Heart left ventricle (tissue), 16 donors: ENCODE measurements at regions of chr1 and their contacts with region 1.

Region 1: GRCh38 chr1:210400043-210400840 is 71.5 kb downstream of the HHAT start:
- DNase-seq: peak in 4 of 5 donors; percentile 30 to 64 (median 48)
- ATAC-seq: peak; percentile 88 to 94 (median 91)
- H3K4me3 ChIP-seq: no peak overlapping the region
- H3K27ac ChIP-seq: no peak overlapping the region
- H3K4me1 ChIP-seq: peaks cover 0 to 11% (median 0%) of the 10 kb centered on the region in 12 donors
- H3K27me3 ChIP-seq: no peaks in the 10 kb centered on the region
- CTCF ChIP-seq: peak; percentile 68 to 90 (median 78)
- POLR2A ChIP-seq: no peak

Region 2: GRCh38 chr1:210143465-210144062 is 256.7 kb before region 1 on chr1:
- intact Hi-C with region 1: loop called (anchors 1 to 5 kb)
- DNase-seq: peak; percentile 47 to 78 (median 61)
- ATAC-seq: peak in 1 of 4 donors; percentile 51
- H3K4me3 ChIP-seq: no peak overlapping the region
- H3K27ac ChIP-seq: no peak overlapping the region
- H3K4me1 ChIP-seq: no peaks in the 10 kb centered on the region
- H3K27me3 ChIP-seq: peaks cover 0 to 7% (median 0%) of the 10 kb centered on the region in 9 donors
- CTCF ChIP-seq: peak; percentile 55 to 80 (median 68)
- POLR2A ChIP-seq: no peak

Region 3: GRCh38 chr1:210360852-210361477 is 39.3 kb before region 1 on chr1:
- intact Hi-C with region 1: loop called in 9 of 10 experiments (anchors 2 to 5 kb)
- DNase-seq: no peak
- ATAC-seq: peak in 3 of 4 donors; percentile 47 to 66 (median 64)
- H3K4me3 ChIP-seq: no peak overlapping the region
- H3K27ac ChIP-seq: no peak overlapping the region
- H3K4me1 ChIP-seq: peaks cover 0 to 26% (median 11%) of the 10 kb centered on the region in 12 donors
- H3K27me3 ChIP-seq: no peaks in the 10 kb centered on the region
- CTCF ChIP-seq: peak; percentile 40 to 73 (median 58)
- POLR2A ChIP-seq: no peak

Region 4: GRCh38 chr1:210600421-210601159 is 200.3 kb after region 1 on chr1:
- intact Hi-C with region 1: no loop called
- DNase-seq: no peak
- ATAC-seq: no peak
- H3K4me3 ChIP-seq: no peak overlapping the region
- H3K27ac ChIP-seq: no peak overlapping the region
- H3K4me1 ChIP-seq: peaks cover 0 to 16% (median 0%) of the 10 kb centered on the region in 12 donors
- H3K27me3 ChIP-seq: no peaks in the 10 kb centered on the region
- CTCF ChIP-seq: no peak
- POLR2A ChIP-seq: no peak

Region 5: DNA sequence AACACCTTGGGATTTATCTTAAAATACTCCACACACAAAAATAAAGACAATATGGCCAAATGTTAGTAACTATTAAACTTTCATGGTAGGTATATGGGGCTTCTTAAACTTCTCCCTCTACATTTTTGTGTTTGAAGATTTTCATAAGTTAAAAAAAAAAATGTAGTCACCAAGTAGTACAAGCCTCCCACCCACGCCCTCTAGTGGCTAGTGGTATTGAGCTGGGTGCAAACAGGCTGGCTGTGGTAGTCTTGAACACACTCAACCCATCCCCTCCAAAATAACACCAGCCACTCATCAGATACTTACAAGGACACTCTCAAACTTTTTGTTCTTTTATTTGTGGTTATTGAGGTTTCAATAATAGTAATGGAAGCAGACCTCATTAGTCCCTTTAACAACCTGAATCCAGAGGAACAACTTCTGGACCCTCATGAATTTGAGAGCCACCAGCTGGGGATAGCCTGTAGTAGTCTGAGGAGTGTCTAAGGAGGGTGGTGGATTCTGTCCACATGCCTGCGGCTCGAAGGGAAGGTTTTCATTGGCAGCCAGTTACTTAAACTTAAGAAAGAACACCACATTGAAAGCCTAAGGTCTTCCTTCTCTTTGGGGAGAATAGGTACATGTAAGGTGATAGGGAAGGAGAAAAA is 1076.1 kb after region 1 on chr1:
- intact Hi-C with region 1: loop called in 1 of 10 experiments (anchors 10 kb)
- DNase-seq: peak in 4 of 5 donors; percentile 58 to 72 (median 63)
- ATAC-seq: peak in 2 of 4 donors; percentile 64 to 67
- H3K4me3 ChIP-seq: no peak overlapping the region
- H3K27ac ChIP-seq: no peak overlapping the region
- H3K4me1 ChIP-seq: peaks cover 0 to 6% (median 0%) of the 10 kb centered on the region in 12 donors
- H3K27me3 ChIP-seq: peaks cover 0 to 27% (median 8%) of the 10 kb centered on the region in 9 donors
- CTCF ChIP-seq: peak; percentile 58 to 88 (median 74)
- POLR2A ChIP-seq: no peak